PC-3 (cell line): ENCODE measurements at regions of chr4 and their contacts with region 1.

Region 1: DNA sequence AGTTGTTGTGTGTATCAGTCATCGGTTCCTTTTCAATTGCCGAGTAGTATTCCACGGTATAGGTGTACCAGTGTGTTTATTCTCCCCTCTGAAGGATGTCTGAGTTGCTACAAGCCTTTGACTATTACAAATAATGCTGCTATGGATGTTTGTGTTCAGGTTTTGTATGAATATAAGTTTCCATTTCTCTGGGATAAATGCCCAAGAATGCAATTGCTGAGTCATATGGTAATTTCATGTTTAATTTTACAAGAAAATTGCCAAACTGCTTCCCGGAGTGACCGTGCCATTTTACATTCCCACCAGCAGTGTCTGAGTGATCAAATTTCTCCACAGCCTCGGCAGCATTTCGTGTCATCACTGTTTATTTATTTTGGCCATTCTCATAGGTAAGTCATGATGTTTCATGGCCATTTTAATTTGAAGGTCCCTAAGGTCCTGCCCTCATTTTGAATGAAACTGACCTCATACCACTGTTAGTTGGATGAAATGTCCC is 73.9 kb downstream of the IRF2 start:
- DNase-seq: peak; percentile 91
- ATAC-seq: peak; percentile 96
- H3K4me3 ChIP-seq: no peak overlapping the region
- H3K27ac ChIP-seq: peak overlapping the region; percentile 89
- H3K4me1 ChIP-seq: peaks cover 14% of the 10 kb centered on the region
- H3K27me3 ChIP-seq: no peaks in the 10 kb centered on the region
- CTCF ChIP-seq: no peak

Region 2: GRCh38 chr4:184343502-184344177 is 56.8 kb before region 1 on chr4:
- CTCF ChIA-PET with region 1: no interaction called
- POLR2A ChIA-PET with region 1: no interaction called
- intact Hi-C with region 1: loop called (anchors 5 kb)
- DNase-seq: peak; percentile 73
- ATAC-seq: peak; percentile 96
- H3K4me3 ChIP-seq: peak overlapping the region; percentile 76
- H3K27ac ChIP-seq: no peak overlapping the region
- H3K4me1 ChIP-seq: peaks cover 17% of the 10 kb centered on the region
- H3K27me3 ChIP-seq: no peaks in the 10 kb centered on the region
- CTCF ChIP-seq: no peak

Region 3: DNA sequence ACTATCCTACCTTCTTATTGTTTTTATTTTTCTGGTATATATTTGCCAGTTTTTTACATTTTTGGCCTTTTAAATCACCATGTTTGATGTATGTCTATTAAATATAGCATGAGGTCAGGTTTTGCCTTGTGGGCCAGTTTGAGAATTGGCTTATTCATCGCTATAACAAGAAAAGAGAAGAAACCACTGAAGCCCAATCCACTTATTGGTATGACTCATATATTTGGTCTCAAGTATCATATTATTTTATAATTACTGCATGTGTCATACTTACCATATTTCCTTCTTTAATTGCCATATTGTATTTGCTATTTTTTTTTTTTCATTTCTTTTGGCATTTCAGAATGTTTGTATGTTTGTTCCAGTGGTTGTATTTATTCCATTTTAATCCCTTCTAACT is 25.4 kb before region 1 on chr4:
- CTCF ChIA-PET with region 1: no interaction called
- POLR2A ChIA-PET with region 1: no interaction called
- intact Hi-C with region 1: loop called (anchors 2 kb)
- DNase-seq: peak; percentile 65
- ATAC-seq: peak; percentile 87
- H3K4me3 ChIP-seq: no peak overlapping the region
- H3K27ac ChIP-seq: peak overlapping the region; percentile 61
- H3K4me1 ChIP-seq: peaks cover 22% of the 10 kb centered on the region
- H3K27me3 ChIP-seq: no peaks in the 10 kb centered on the region
- CTCF ChIP-seq: no peak

Region 4: DNA sequence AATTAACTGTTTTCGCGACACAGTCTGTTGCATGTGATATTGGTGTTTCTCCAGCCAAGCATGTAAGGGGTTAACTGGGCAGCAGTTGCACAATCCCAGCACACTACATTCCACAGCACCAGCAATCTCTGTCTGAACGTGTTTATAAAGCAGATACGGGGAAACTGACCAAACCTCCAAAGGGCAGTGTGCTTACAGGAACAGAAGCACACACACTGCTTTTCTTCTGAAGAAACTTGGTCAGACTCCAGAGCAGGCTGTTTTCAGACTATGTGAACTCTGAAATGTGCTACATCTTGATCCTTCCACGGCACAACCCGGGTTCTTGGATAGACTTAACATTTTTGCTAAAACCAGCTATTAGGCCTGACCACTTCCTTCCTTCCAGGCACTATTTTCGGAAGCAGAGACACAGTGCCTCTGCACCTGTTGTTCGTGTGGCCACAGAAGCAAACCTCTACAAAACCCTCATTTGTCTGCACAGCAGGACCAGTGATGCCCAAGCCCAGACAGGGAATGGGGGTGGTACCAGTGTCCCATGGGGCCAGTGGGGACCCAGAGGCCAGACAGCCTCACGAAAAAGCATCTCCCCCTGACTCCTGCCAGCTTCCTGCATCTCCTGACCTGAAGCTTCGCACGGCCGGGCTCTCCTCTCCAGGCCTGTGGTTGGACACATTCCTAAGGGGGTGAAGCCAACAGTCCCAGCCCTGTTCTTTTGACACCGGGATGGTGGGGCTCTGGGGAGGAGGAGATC is 16.2 kb before region 1 on chr4:
- CTCF ChIA-PET with region 1: no interaction called
- POLR2A ChIA-PET with region 1: no interaction called
- intact Hi-C with region 1: loop called (anchors 1 kb)
- DNase-seq: peak; percentile 43
- ATAC-seq: peak; percentile 52
- H3K4me3 ChIP-seq: peak overlapping the region; percentile 64
- H3K27ac ChIP-seq: peak overlapping the region; percentile 94
- H3K4me1 ChIP-seq: peaks cover 26% of the 10 kb centered on the region
- H3K27me3 ChIP-seq: no peaks in the 10 kb centered on the region
- CTCF ChIP-seq: no peak

Region 5: GRCh38 chr4:184474263-184475095 is 74.1 kb after region 1 on chr4 and contains the start of gene IRF2:
- CTCF ChIA-PET with region 1: no interaction called
- POLR2A ChIA-PET with region 1: no interaction called
- intact Hi-C with region 1: loop called (anchors 5 kb)
- DNase-seq: peak; percentile 90
- ATAC-seq: peak; percentile 66
- H3K4me3 ChIP-seq: peak within 1 kb of the TSS; percentile 99
- H3K27ac ChIP-seq: peak within 1 kb of the TSS; percentile 84
- H3K4me1 ChIP-seq: peaks cover 16% of the 10 kb centered on the region; the same call in 1 of the 2 replicates
- H3K27me3 ChIP-seq: no peaks in the 10 kb centered on the region
- CTCF ChIP-seq: no peak
- total RNA-seq, gene IRF2: 7.7 TPM in 2 replicates

Region 6: GRCh38 chr4:184538023-184538599 is 137.7 kb after region 1 on chr4:
- CTCF ChIA-PET with region 1: no interaction called
- POLR2A ChIA-PET with region 1: no interaction called
- intact Hi-C with region 1: loop called (anchors 1 kb)
- DNase-seq: peak; percentile 80
- ATAC-seq: peak; percentile 79
- H3K4me3 ChIP-seq: peak overlapping the region; percentile 85
- H3K27ac ChIP-seq: peak overlapping the region; percentile 84
- H3K4me1 ChIP-seq: peaks cover 4% of the 10 kb centered on the region; the same call in 1 of the 2 replicates
- H3K27me3 ChIP-seq: no peaks in the 10 kb centered on the region
- CTCF ChIP-seq: peak; percentile 68

Region 7: DNA sequence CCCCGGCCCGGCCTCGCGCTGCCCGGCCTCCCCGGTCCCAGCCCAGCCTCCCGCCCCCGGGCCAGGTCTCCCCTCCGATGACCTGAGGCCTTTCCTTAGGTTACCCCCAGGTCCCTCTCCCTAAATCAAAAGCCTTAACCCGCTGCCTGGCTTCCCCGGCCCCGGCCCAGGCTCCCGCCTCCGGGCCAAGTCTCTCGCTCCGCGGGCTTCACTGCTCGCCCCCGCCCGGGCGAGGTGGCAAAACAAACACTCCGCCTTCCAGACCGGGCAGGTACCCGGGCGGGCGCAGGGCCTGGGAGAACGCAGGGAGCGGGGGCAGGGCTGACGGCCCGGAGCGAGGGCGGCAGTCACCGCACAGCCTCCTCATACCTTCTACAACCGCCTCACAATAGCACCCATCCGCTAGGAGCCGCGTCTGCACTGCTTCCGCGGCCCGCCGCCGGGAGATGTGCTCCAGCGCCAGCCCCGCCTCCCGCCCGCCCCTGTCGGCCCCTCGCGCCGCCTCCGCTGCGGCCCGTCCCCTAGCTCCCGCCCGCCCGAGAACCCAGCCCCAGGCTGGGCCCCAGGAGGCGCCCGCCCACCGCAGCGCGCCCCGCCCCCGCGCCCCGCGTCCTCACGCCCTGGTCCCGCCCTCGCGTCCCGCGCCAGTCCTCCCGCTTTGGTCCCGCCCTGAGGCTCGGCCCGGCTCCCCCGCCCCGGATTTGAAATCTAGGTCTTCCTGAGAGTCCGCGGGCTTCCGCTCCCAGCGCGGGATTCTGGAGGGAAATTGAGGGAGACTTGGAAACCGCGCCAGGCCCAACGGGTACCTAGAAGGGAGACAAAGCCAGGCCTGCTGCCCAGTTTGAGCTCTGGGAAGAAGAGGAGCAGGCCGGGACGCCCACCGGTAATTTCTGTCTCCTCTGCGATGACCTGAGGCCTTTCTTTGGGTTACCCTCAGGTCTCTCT is 248.9 kb after region 1 on chr4 and contains the starts of genes CASP3 and PRIMPOL:
- CTCF ChIA-PET with region 1: no interaction called
- POLR2A ChIA-PET with region 1: no interaction called
- intact Hi-C with region 1: loop called (anchors 10 kb)
- DNase-seq: peak; percentile 89
- ATAC-seq: peak; percentile 82
- H3K4me3 ChIP-seq: peak within 1 kb of the TSS; percentile 93
- H3K27ac ChIP-seq: peak within 1 kb of the TSS; percentile 57
- H3K4me1 ChIP-seq: peaks cover 21% of the 10 kb centered on the region
- H3K27me3 ChIP-seq: no peaks in the 10 kb centered on the region
- CTCF ChIP-seq: 0 out of 2 replicates have a peak, but pooled peaks have one; percentile 7
- total RNA-seq, gene CASP3: 11.1 and 13.2 TPM in 2 replicates
- total RNA-seq, gene PRIMPOL: 9.3 and 9.4 TPM in 2 replicates

Region 8: GRCh38 chr4:184733654-184734524 is 333.5 kb after region 1 on chr4 and contains the start of gene CENPU:
- CTCF ChIA-PET with region 1: no interaction called
- POLR2A ChIA-PET with region 1: no interaction called
- intact Hi-C with region 1: no loop called
- DNase-seq: peak; percentile 96
- ATAC-seq: peak; percentile 82
- H3K4me3 ChIP-seq: peak within 1 kb of the TSS; percentile 95
- H3K27ac ChIP-seq: peak within 1 kb of the TSS; percentile 71
- H3K4me1 ChIP-seq: peaks cover 16% of the 10 kb centered on the region
- H3K27me3 ChIP-seq: no peaks in the 10 kb centered on the region
- CTCF ChIP-seq: no peak
- total RNA-seq, gene CENPU: 27.6 and 38.2 TPM in 2 replicates